ENCODE measurements at regions of chr2 and their contacts with region 1.

Region 1: DNA sequence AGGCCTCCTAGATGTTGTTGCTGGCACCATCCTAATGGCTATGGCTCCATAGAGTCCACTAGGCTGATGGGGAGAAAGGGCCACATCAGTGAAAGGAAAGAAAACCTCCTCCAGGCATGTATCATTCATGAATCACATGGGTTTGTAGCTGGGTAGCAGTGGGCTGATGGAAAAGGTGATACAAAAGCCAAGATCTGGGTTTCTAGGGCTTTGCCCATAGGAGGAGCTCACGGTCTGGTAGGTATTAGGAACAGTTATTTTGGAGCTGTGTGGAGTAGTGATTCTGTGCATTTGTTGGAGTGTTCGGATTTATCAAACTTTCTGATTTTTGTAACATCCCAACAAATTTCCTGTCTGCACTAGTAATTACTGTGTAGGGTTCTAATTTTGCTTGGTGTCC is 259.2 kb downstream of the SLC4A3 start:
- DNase-seq: peak; percentile 56
- H3K4me3 ChIP-seq: no peak overlapping the region
- H3K27ac ChIP-seq: no peak overlapping the region
- H3K4me1 ChIP-seq: no peaks in the 10 kb centered on the region
- H3K27me3 ChIP-seq: no peaks in the 10 kb centered on the region
- CTCF ChIP-seq: peak; percentile 8 to 53

Region 2: GRCh38 chr2:219997341-219997851 is 110.8 kb after region 1 on chr2:
- CTCF ChIA-PET with region 1: no interaction called
- dilution Hi-C with region 1: no loop called
- in situ Hi-C with region 1: no loop called
- intact Hi-C with region 1: loop called (anchors 2 kb)
- DNase-seq: peak; percentile 11
- H3K4me3 ChIP-seq: no peak overlapping the region
- H3K27ac ChIP-seq: no peak overlapping the region
- H3K4me1 ChIP-seq: no peaks in the 10 kb centered on the region
- H3K27me3 ChIP-seq: no peaks in the 10 kb centered on the region
- CTCF ChIP-seq: peak; percentile 46 to 65

Region 3: DNA sequence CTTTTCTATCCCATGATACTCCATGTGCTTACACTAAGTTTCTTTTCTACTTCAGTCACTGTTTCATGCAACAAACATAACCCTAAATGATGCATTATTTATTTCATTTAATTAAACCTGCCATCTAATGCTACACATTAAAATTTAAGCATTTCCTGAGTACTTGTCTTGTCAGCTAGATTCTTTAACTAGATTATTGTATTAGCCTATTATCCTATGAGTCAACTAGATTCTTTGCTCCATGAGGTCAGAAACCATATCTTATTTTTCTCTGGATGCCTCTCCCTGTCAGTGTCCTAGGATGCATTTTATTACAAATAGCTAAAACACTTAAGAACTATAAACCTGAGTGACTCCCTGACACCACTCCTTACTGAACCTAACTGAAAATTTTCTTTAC is 393.2 kb after region 1 on chr2:
- CTCF ChIA-PET with region 1: no interaction called
- dilution Hi-C with region 1: no loop called
- in situ Hi-C with region 1: no loop called
- intact Hi-C with region 1: no loop called
- DNase-seq: peak; percentile 54
- H3K4me3 ChIP-seq: no peak overlapping the region
- H3K27ac ChIP-seq: peak overlapping the region; percentile 93
- H3K4me1 ChIP-seq: peaks cover 49% of the 10 kb centered on the region
- H3K27me3 ChIP-seq: no peaks in the 10 kb centered on the region
- CTCF ChIP-seq: no peak